ENCODE measurements at regions of chr2 and their contacts with region 1.

Region 1: DNA sequence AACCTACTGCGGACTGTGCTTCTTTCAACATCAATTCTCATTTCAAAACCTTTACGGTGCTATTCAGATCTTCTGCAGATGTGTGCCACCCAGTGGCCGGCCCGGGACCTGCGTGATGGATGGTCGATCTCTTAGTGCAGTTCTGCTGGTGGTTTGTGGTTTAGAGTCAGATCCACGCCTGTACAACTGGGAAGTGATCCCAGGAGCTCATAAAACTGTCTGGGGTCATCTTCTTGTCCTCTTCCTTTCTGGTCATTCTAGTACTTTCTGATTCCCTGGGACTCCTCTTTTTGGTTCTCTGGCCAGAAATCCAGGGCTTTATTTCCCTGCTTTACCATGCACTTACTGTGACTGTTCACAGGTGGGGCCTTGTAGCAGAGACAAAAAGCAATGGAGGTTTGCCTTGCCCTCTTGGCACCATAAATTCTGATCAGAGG is 15.8 kb upstream of the SELENOI start:
- DNase-seq: peak; percentile 70 to 80
- H3K4me3 ChIP-seq: no peak overlapping the region
- H3K27ac ChIP-seq: no peak overlapping the region
- H3K4me1 ChIP-seq: peaks cover 5% of the 10 kb centered on the region; the same call in 1 of the 2 replicates
- H3K27me3 ChIP-seq: no peaks in the 10 kb centered on the region
- CTCF ChIP-seq: peak; percentile 92

Region 2: DNA sequence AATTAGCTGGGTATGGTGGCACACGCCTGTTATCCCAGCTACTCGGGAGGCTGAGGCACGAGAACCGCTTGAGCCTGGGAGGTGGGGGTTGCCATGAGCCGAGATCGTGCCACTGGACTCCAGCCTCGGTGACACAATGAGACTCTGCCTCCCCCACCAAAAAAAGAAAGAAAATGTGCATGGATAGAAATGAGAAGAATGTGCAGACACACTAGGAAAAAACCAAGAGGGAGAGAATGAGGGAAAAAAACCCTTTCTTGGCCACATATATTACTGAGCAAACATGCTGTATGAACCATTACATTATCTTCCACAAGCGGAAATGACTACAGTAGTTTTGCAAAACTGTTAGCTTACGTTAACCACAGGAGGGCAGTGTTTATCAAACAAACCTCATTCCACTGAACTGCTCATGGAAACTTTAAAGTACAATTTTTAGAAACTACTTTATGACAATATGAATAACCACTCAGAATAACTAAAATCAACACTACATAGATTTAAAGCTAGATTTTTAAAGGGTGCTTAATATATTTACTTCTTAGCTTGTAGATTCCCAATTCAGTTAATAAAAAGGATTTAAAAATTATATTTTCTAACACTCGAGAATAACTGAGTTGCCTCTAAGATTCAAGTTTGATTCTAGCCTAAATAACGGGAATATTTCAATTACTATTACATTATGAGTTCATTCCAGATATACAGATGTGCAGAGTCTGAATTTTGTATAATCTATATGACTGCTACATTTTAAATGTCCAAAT is 478.2 kb before region 1 on chr2:
- CTCF ChIA-PET with region 1: no interaction called
- POLR2A ChIA-PET with region 1: no interaction called
- intact Hi-C with region 1: loop called (anchors 10 kb)
- DNase-seq: peak; percentile 22 to 75
- H3K4me3 ChIP-seq: no peak overlapping the region
- H3K27ac ChIP-seq: peak overlapping the region; percentile 5; the same call in 1 of the 2 replicates
- H3K4me1 ChIP-seq: peaks cover 11% of the 10 kb centered on the region
- H3K27me3 ChIP-seq: no peaks in the 10 kb centered on the region
- CTCF ChIP-seq: peak; percentile 85

Region 3: DNA sequence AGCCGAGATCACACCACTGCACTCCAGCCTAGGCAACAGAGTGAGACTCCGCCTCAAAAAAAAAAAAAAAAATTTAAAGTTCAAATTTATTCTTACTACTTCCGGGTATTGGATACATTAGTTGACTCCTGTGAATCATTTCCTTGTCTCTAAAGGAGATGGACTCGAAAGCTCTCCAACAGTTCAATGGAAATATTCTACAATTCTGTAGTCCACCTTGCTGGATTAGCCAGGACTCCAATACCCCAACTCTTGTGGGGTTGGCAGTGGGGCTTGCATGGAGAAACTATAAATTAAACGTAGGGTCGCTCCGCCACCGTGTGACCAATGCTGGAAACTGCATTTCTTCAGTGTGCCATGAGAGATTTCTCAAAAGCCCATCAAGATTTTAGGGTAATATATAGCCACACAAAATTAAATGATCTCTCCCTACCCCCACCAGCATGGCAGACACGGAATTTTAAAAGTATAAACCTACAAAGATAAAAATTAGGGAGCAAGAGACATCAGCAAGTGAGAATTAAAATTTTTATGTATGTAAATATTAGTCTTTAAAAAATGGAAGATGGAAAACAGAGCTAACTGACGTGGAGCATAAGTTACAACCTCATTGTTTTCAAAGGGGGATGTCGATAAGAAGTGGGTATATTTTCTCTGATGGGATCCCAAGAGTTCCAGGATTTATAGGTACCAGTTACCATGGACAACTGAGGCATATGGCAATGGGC is 185.0 kb before region 1 on chr2:
- CTCF ChIA-PET with region 1: no interaction called
- POLR2A ChIA-PET with region 1: no interaction called
- intact Hi-C with region 1: loop called (anchors 2 kb)
- DNase-seq: peak; percentile 51 to 60
- H3K4me3 ChIP-seq: no peak overlapping the region
- H3K27ac ChIP-seq: no peak overlapping the region
- H3K4me1 ChIP-seq: peaks cover 23% of the 10 kb centered on the region
- H3K27me3 ChIP-seq: no peaks in the 10 kb centered on the region
- CTCF ChIP-seq: peak; percentile 88

Region 4: GRCh38 chr2:26235085-26235484 is 95.0 kb before region 1 on chr2:
- CTCF ChIA-PET with region 1: no interaction called
- POLR2A ChIA-PET with region 1: no interaction called
- intact Hi-C with region 1: loop called (anchors 2 kb)
- DNase-seq: no peak
- H3K4me3 ChIP-seq: no peak overlapping the region
- H3K27ac ChIP-seq: no peak overlapping the region
- H3K4me1 ChIP-seq: peaks cover 2% of the 10 kb centered on the region
- H3K27me3 ChIP-seq: no peaks in the 10 kb centered on the region
- CTCF ChIP-seq: peak; percentile 55

Region 5: GRCh38 chr2:26244309-26245121 is 85.6 kb before region 1 on chr2 and contains the starts of genes HADHA and HADHB:
- CTCF ChIA-PET with region 1: no interaction called
- POLR2A ChIA-PET with region 1: no interaction called
- intact Hi-C with region 1: loop called (anchors 1 kb)
- DNase-seq: peak; percentile 82 to 91
- H3K4me3 ChIP-seq: peak within 1 kb of the TSS; percentile 95
- H3K27ac ChIP-seq: peak within 1 kb of the TSS; percentile 75
- H3K4me1 ChIP-seq: peaks cover 41% of the 10 kb centered on the region
- H3K27me3 ChIP-seq: no peaks in the 10 kb centered on the region
- CTCF ChIP-seq: no peak; the same call in 1 of the 2 replicates
- total RNA-seq, gene HADHA: 99.9 and 129 TPM in 2 replicates
- total RNA-seq, gene HADHB: 72.7 and 73.1 TPM in 2 replicates

Region 6: DNA sequence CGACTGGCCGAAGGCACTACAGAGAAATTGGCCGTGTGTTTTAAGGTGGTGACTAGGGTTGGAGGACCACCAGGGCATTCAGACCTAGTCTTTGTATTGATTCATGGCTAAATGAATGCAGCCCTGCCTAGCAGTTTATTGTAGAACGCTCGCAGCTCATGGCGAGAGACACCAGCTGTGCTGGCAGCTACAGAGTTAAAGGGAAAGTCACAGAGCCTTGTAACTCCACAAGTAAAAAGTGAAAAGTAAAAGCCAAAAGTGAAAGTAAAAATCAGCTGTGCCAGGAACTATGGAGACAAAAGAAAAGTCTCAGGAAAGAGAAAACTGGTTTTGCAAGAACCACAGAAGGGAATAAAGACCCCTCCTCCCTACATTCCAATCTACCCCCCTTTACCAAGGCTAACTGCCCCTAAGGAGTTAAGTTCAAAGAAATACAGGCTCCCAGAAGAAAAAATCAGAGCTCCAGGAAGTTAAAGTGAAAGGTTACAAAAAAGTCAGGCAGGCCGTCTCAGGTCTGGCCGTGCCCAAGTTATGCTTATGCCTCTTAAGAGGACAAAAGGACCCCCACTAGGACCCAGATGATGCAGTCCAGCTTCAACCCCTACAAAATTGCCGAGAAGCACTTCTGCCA is 30.5 kb before region 1 on chr2:
- CTCF ChIA-PET with region 1: interaction called, 4 read pairs
- POLR2A ChIA-PET with region 1: no interaction called
- intact Hi-C with region 1: loop called (anchors 2 kb)
- DNase-seq: peak; percentile 55 to 82
- H3K4me3 ChIP-seq: peak overlapping the region; percentile 56
- H3K27ac ChIP-seq: peak overlapping the region; percentile 10
- H3K4me1 ChIP-seq: peaks cover 27% of the 10 kb centered on the region
- H3K27me3 ChIP-seq: no peaks in the 10 kb centered on the region
- CTCF ChIP-seq: no peak

Measured in PC-9 (cell line).